Activated CD4-positive, alpha-beta memory T cell treated with anti-CD3 and anti-CD28 coated beads, Interleukin-2, amount 10 ng/mL, durations not matched to agents 7 days and 5 days (primary cell): ENCODE measurements at regions of chr17 and their contacts with region 1.

Region 1: GRCh38 chr17:5438716-5439445 is at the start of gene C1QBP:
- DNase-seq: peak; percentile 94
- H3K4me3 Mint-ChIP-seq: peak within 1 kb of the TSS; percentile 72
- H3K27ac Mint-ChIP-seq: peak within 1 kb of the TSS; percentile 85
- H3K4me1 Mint-ChIP-seq: peaks cover 44% of the 10 kb centered on the region
- H3K27me3 Mint-ChIP-seq: no peaks in the 10 kb centered on the region
- total RNA-seq, gene C1QBP: 123 TPM

Region 2: GRCh38 chr17:5354876-5355415 is 83.9 kb before region 1 on chr17:
- CTCF ChIA-PET with region 1: no interaction called
- POLR2A ChIA-PET with region 1: no interaction called
- DNase-seq: no peak
- H3K4me3 Mint-ChIP-seq: no peak overlapping the region
- H3K27ac Mint-ChIP-seq: no peak overlapping the region
- H3K4me1 Mint-ChIP-seq: no peaks in the 10 kb centered on the region
- H3K27me3 Mint-ChIP-seq: no peaks in the 10 kb centered on the region

Region 3: GRCh38 chr17:5413682-5414081 is 25.2 kb before region 1 on chr17:
- CTCF ChIA-PET with region 1: interaction called, 37 read pairs
- POLR2A ChIA-PET with region 1: interaction called, 77 read pairs
- DNase-seq: no peak
- H3K4me3 Mint-ChIP-seq: no peak overlapping the region
- H3K27ac Mint-ChIP-seq: no peak overlapping the region
- H3K4me1 Mint-ChIP-seq: peaks cover 56% of the 10 kb centered on the region
- H3K27me3 Mint-ChIP-seq: no peaks in the 10 kb centered on the region

Region 4: DNA sequence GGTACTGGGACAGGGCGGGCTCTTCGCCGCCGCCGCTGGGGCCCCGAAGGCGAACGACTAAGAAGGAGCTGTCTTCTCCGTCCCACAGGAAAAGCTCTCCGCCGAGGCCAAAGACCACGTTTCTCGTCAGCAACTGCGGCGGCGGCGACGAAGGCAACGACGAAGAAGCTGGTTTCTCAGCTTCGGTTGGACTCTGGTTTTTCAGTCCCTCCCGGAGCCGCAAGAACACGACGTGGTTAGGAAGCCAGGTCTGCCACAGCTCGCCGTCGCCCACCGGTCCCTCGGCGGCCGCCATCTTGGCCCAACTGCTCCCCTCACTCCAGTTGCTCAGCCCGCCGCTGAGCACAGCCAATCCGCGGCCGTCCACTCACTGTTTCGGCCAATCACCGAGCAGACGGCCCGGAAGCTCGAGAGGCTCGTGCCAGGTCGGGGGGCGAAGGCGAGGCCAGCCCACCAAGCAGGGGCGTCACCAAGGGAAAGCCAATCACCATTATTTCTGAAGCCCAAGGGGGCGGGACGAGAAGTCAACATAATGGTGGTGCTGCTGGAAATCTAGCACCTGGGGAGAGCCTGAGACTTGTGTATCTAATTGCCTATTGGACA is 19.4 kb before region 1 on chr17 and contains the start of gene NUP88:
- CTCF ChIA-PET with region 1: interaction called, 37 read pairs
- POLR2A ChIA-PET with region 1: interaction called, 77 read pairs
- DNase-seq: peak; percentile 97
- H3K4me3 Mint-ChIP-seq: peak within 1 kb of the TSS; percentile 99
- H3K27ac Mint-ChIP-seq: peak within 1 kb of the TSS; percentile 99
- H3K4me1 Mint-ChIP-seq: peaks cover 45% of the 10 kb centered on the region
- H3K27me3 Mint-ChIP-seq: no peaks in the 10 kb centered on the region
- total RNA-seq, gene NUP88: 80.6 to 85.9 TPM

Region 5: DNA sequence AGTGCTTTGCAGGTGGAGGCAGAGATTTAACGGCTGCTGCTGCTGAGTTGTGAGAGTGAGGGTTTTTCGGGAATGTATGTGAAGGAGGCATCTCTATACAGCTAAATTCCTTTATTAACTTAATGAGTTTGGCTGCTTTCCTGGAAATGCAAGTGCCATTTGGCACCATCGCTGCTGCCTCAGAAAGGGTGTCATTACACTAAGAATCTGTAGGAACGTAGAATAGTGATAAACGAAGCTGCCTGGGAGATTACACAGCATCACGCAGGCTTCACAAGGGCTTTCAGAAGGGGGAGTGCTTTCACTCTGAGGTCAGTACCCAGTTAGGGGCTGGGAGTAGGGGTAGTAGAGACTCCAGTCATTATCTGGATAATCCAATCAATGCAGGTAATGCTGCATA is 159.6 kb after region 1 on chr17:
- CTCF ChIA-PET with region 1: no interaction called
- POLR2A ChIA-PET with region 1: no interaction called
- DNase-seq: no peak
- H3K4me3 Mint-ChIP-seq: no peak overlapping the region
- H3K27ac Mint-ChIP-seq: no peak overlapping the region
- H3K4me1 Mint-ChIP-seq: no peaks in the 10 kb centered on the region
- H3K27me3 Mint-ChIP-seq: peaks cover 58% of the 10 kb centered on the region

Region 6: GRCh38 chr17:5912991-5913531 is 474.2 kb after region 1 on chr17:
- CTCF ChIA-PET with region 1: no interaction called
- POLR2A ChIA-PET with region 1: no interaction called
- DNase-seq: no peak
- H3K4me3 Mint-ChIP-seq: no peak overlapping the region
- H3K27ac Mint-ChIP-seq: no peak overlapping the region
- H3K4me1 Mint-ChIP-seq: no peaks in the 10 kb centered on the region
- H3K27me3 Mint-ChIP-seq: no peaks in the 10 kb centered on the region